ENCODE measurements at regions of chr19 and their contacts with region 1.

Region 1: GRCh38 chr19:10835754-10836477 is at the start of gene TMED1:
- DNase-seq: peak; percentile 99
- H3K4me3 ChIP-seq: peak within 1 kb of the TSS; percentile 65 to 96 (median 73)
- H3K27ac ChIP-seq: peak within 1 kb of the TSS; percentile 93
- H3K4me1 ChIP-seq: peaks cover 17% of the 10 kb centered on the region
- H3K27me3 ChIP-seq: no peaks in the 10 kb centered on the region
- CTCF ChIP-seq: peak in 1 of 2 donors; percentile 31
- total RNA-seq, gene TMED1: 21.3 to 26.7 TPM

Region 2: DNA sequence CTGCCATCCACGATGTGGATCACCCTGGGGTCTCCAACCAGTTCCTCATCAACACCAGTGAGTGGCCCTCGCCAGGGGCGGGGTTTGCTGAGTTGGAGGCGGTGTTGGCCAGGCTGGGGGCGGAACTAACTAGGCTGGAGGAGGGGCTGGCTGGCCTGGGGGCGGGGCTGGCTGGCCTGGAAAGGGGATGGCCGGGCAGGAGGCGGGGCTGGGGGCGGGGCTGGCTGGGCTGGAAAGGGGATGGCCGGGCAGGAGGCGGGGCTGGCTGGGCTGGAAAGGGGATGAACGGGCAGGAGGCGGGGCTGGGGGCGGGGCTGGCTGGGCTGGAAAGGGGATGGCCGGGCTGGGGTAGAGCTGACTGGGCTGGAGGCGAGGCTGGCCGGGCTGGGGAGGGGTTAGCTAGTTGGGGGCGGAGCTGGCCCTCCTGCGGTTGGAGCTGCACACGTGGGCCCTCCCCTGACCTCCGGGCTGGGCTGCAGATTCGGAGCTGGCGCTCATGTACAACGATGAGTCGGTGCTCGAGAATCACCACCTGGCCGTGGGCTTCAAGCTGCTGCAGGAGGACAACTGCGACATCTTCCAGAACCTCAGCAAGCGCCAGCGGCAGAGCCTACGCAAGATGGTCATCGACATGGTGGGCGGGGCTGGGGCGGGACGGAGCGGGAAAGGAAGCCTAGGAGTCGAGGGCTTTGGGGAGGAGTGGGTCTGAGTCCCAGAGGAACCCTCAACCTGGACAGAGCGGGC is 374.7 kb before region 1 on chr19:
- CTCF ChIA-PET with region 1: no interaction called
- dilution Hi-C with region 1: no loop called
- in situ Hi-C with region 1: no loop called
- intact Hi-C with region 1: loop called (anchors 2 kb)
- DNase-seq: peak; percentile 90
- H3K4me3 ChIP-seq: peak overlapping the region; percentile 17 to 41 (median 37)
- H3K27ac ChIP-seq: no peak overlapping the region
- H3K4me1 ChIP-seq: peaks cover 7% of the 10 kb centered on the region
- H3K27me3 ChIP-seq: no peaks in the 10 kb centered on the region
- CTCF ChIP-seq: no peak

Region 3: DNA sequence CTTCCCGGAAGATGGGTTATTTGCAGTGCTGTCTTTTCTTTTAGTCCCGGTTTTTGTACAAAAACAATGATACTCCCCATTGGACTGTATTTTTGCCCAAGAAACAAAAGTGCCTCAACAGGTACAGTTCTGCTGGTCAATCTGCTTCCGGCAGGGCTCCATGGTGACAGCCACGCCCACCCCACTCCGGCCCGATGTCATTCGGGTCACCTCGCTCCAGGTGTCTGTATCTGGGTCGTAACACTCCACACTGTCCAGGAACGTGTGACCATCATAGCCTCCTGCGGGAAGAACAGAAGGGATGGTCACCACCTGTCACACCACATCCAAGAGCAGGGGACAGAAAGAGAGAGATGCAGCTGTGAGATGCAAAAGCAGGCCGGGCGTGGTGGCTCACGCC is 349.4 kb before region 1 on chr19:
- CTCF ChIA-PET with region 1: interaction called, 13 read pairs
- dilution Hi-C with region 1: no loop called
- in situ Hi-C with region 1: no loop called
- intact Hi-C with region 1: no loop called
- DNase-seq: no peak
- H3K4me3 ChIP-seq: no peak overlapping the region
- H3K27ac ChIP-seq: no peak overlapping the region
- H3K4me1 ChIP-seq: no peaks in the 10 kb centered on the region
- H3K27me3 ChIP-seq: no peaks in the 10 kb centered on the region
- CTCF ChIP-seq: no peak

Region 4: GRCh38 chr19:10717356-10718204 is 118.3 kb before region 1 on chr19 and contains the start of gene DNM2:
- CTCF ChIA-PET with region 1: interaction called, 4 read pairs
- dilution Hi-C with region 1: no loop called
- in situ Hi-C with region 1: no loop called
- intact Hi-C with region 1: loop called (anchors 1 kb)
- DNase-seq: peak; percentile 100
- H3K4me3 ChIP-seq: peak within 1 kb of the TSS; percentile 63 to 99 (median 97)
- H3K27ac ChIP-seq: peak within 1 kb of the TSS; percentile 31
- H3K4me1 ChIP-seq: peaks cover 12% of the 10 kb centered on the region
- H3K27me3 ChIP-seq: no peaks in the 10 kb centered on the region
- CTCF ChIP-seq: peak; percentile 82 to 88
- total RNA-seq, gene DNM2: 95.9 to 125 TPM

Region 5: DNA sequence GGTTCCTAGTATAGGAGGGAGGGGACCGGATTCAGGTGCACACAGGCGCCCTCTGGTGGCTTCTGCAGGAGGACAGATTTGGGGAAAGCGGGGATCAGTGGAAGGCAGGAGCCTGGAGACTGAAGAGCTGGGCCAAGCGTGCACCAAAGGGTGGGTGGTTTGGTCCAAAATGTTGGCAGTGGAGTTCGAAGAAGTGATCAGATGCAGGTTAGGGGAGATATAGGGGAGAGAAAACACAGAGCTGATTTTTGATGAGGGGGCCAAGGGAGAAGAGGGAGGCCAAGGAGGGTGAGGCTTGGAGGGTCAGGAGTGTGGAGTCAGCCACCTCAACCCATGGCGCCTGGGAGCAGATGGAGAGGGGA is 28.6 kb after region 1 on chr19:
- CTCF ChIA-PET with region 1: interaction called, 9 read pairs
- dilution Hi-C with region 1: no loop called
- in situ Hi-C with region 1: no loop called
- intact Hi-C with region 1: loop called (anchors 2 kb)
- DNase-seq: peak; percentile 47
- H3K4me3 ChIP-seq: no peak overlapping the region
- H3K27ac ChIP-seq: no peak overlapping the region
- H3K4me1 ChIP-seq: peaks cover 4% of the 10 kb centered on the region
- H3K27me3 ChIP-seq: no peaks in the 10 kb centered on the region
- CTCF ChIP-seq: peak; percentile 93 to 95

Region 6: DNA sequence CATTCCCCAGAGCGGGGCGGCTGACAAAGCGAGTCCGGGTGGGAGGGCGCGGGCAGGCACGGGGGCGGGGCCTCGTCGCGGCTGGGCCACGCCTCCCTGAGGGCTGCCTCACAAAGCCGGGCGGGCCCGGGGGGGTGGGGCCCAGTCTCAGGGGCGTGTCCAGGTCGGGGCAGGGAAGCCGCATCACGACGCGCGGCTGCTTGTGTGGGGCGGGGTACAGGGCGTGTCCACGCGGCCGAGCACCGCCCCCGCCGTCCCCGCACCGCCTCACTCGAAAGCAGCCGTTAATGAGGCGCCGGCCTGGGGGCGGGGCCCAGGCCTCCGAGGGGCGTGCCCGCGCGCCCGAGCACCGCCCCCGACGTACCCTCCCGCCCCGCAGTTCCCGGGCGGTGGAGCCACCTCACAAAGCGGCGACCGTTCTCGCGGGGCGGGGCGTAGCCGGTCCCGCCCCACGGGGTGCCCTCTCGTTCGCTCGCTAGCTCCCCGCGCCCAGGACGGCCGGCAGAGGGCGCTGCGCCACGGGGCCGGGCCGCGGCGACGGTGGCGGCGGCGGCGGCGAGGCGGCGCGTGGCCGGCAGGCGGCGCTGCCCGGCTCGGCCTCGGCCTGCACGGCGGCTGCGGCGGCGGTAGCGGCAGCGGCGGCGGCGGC is 35.2 kb after region 1 on chr19 and contains the start of gene CARM1:
- CTCF ChIA-PET with region 1: interaction called, 4 read pairs
- dilution Hi-C with region 1: no loop called
- in situ Hi-C with region 1: no loop called
- intact Hi-C with region 1: loop called (anchors 1 kb)
- DNase-seq: peak; percentile 97
- H3K4me3 ChIP-seq: peak within 1 kb of the TSS; percentile 78 to 90 (median 85)
- H3K27ac ChIP-seq: peak within 1 kb of the TSS; percentile 51
- H3K4me1 ChIP-seq: peaks cover 4% of the 10 kb centered on the region
- H3K27me3 ChIP-seq: no peaks in the 10 kb centered on the region
- CTCF ChIP-seq: peak; percentile 49 to 60
- total RNA-seq, gene CARM1: 29.2 to 58.5 TPM

Region 7: GRCh38 chr19:12681074-12681951 is 1845.4 kb after region 1 on chr19 and contains the start of gene DHPS:
- CTCF ChIA-PET with region 1: interaction called, 26 read pairs
- dilution Hi-C with region 1: no loop called
- in situ Hi-C with region 1: no loop called
- intact Hi-C with region 1: no loop called
- DNase-seq: peak; percentile 97
- H3K4me3 ChIP-seq: peak within 1 kb of the TSS; percentile 81 to 89 (median 83)
- H3K27ac ChIP-seq: peak within 1 kb of the TSS; percentile 95
- H3K4me1 ChIP-seq: no peaks in the 10 kb centered on the region
- H3K27me3 ChIP-seq: no peaks in the 10 kb centered on the region
- CTCF ChIP-seq: no peak
- total RNA-seq, gene DHPS: 46.5 to 73.8 TPM